ENCODE measurements at regions of chr13 and their contacts with region 1.

Region 1: GRCh38 chr13:113562085-113562749 is 22.3 kb upstream of the TFDP1 start:
- DNase-seq: no peak
- H3K4me3 ChIP-seq: no peak overlapping the region
- H3K27me3 ChIP-seq: no peaks in the 10 kb centered on the region
- CTCF ChIP-seq: peak; percentile 91

Region 2: GRCh38 chr13:113458253-113459065 is 103.8 kb before region 1 on chr13:
- CTCF ChIA-PET with region 1: interaction called, 23 read pairs
- POLR2A ChIA-PET with region 1: no interaction called
- DNase-seq: no peak
- H3K4me3 ChIP-seq: no peak overlapping the region
- H3K27me3 ChIP-seq: no peaks in the 10 kb centered on the region
- CTCF ChIP-seq: peak; percentile 48

Region 3: DNA sequence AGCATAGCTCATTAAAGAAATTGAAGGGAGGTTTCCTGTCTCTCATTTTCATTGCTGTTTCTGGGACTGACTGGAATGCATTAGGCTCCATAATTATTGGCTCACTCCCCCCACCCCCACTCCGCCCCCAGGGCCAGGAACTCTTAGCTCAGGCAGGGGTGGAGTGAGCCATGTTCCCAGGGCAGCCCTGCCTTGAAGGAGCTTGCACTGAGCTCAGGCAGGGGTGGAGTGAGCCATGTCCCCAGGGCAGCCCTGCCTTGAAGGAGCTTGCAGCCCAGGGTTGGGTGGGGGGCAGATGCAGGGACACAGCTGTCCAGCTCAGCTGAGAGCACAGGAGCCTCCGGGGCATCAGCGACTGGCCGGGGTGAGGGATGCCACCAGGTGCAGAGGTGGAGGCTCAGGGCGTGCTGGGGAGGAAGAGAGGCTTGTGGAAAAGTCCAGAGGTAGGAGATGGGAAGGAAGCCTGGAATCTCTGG is 16.7 kb before region 1 on chr13:
- CTCF ChIA-PET with region 1: interaction called, 11 read pairs
- POLR2A ChIA-PET with region 1: interaction called, 7 read pairs
- DNase-seq: peak; percentile 41
- H3K4me3 ChIP-seq: no peak overlapping the region
- H3K27me3 ChIP-seq: no peaks in the 10 kb centered on the region
- CTCF ChIP-seq: no peak

Region 4: GRCh38 chr13:113573065-113573464 is 10.8 kb after region 1 on chr13:
- CTCF ChIA-PET with region 1: interaction called, 16 read pairs
- POLR2A ChIA-PET with region 1: no interaction called
- DNase-seq: no peak
- H3K4me3 ChIP-seq: no peak overlapping the region
- H3K27me3 ChIP-seq: peaks cover 2% of the 10 kb centered on the region
- CTCF ChIP-seq: no peak

Region 5: GRCh38 chr13:114303700-114304327 is 741.6 kb after region 1 on chr13:
- CTCF ChIA-PET with region 1: no interaction called
- POLR2A ChIA-PET with region 1: no interaction called
- DNase-seq: no peak
- H3K4me3 ChIP-seq: no peak overlapping the region
- H3K27me3 ChIP-seq: no peaks in the 10 kb centered on the region
- CTCF ChIP-seq: no peak